CD4-positive, alpha-beta memory T cell (primary cell): ENCODE measurements at regions of chr20 and their contacts with region 1.

Region 1: DNA sequence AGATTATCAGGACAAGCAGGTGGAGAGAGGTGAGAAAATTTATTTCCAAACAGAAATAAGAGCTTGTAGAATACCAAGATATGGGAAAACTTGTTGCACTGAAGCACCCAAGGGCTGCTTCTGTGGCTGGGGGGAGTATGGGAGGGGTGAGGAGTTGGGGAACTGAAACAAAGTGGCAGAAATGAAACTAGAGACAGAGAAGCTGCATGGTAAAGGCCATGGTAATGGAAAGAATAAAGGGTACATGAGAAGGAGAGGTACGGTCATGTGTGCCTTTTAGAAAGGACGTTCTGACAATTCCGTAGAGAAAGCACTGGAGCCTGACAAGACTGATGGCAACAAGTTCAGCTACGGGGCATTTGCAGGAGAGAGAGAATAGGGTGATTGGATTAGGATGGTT is 51.6 kb upstream of the RIN2 start:
- DNase-seq: no peak
- H3K4me3 ChIP-seq: no peak overlapping the region
- H3K4me3 Mint-ChIP-seq: no peak overlapping the region
- H3K27ac ChIP-seq: no peak overlapping the region
- H3K27ac Mint-ChIP-seq: no peak overlapping the region
- H3K4me1 ChIP-seq: no peaks in the 10 kb centered on the region
- H3K4me1 Mint-ChIP-seq: no peaks in the 10 kb centered on the region
- H3K27me3 ChIP-seq: no peaks in the 10 kb centered on the region
- H3K27me3 Mint-ChIP-seq: peaks cover 5 to 6% of the 10 kb centered on the region in 2 donors

Region 2: DNA sequence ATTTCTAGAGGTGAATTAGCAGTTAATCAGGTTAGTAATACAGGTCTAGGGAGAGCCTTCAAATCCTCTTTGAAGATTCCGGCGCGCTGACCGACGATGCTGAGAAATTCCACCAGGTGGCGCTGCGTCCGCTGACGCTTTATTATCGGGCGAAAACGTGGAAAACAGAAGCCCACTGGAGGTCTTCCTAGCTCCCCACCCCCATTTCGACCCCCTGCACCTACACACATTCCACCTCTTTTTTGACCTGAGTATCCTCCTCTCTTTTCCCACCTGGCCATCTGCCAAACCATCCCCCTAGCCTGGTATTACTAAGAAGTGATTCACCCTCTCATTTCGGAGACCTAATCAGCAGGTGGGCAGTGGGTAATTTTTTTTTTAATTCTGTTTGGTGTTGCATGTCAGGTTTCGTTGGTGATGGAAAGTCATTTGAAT is 13.8 kb before region 1 on chr20:
- CTCF ChIA-PET with region 1: interaction called, 40 read pairs
- POLR2A ChIA-PET with region 1: no interaction called
- intact Hi-C with region 1: no loop called
- DNase-seq: peak in 4 of 5 donors; percentile 10 to 15 (median 12)
- H3K4me3 ChIP-seq: no peak overlapping the region
- H3K4me3 Mint-ChIP-seq: peak overlapping the region in 1 of 8 donors; percentile 15
- H3K27ac ChIP-seq: no peak overlapping the region
- H3K27ac Mint-ChIP-seq: no peak overlapping the region
- H3K4me1 ChIP-seq: no peaks in the 10 kb centered on the region
- H3K4me1 Mint-ChIP-seq: peaks cover 0 to 5% (median 2%) of the 10 kb centered on the region in 4 donors
- H3K27me3 ChIP-seq: no peaks in the 10 kb centered on the region
- H3K27me3 Mint-ChIP-seq: peaks cover 6 to 18% of the 10 kb centered on the region in 2 donors